Vagina (tissue), 2 donors: ENCODE measurements at regions of chrX and their contacts with region 1.

Region 1: GRCh38 chrX:110156167-110156754 is 153.3 kb downstream of the TMEM164 start:
- DNase-seq: no peak
- H3K4me3 ChIP-seq: no peak overlapping the region
- H3K27ac ChIP-seq: no peak overlapping the region
- H3K4me1 ChIP-seq: peaks cover 7% of the 10 kb centered on the region
- H3K27me3 ChIP-seq: no peaks in the 10 kb centered on the region
- CTCF ChIP-seq: peak in 2 of 3 experiments; percentile 37 to 39
- POLR2A ChIP-seq: no peak

Region 2: DNA sequence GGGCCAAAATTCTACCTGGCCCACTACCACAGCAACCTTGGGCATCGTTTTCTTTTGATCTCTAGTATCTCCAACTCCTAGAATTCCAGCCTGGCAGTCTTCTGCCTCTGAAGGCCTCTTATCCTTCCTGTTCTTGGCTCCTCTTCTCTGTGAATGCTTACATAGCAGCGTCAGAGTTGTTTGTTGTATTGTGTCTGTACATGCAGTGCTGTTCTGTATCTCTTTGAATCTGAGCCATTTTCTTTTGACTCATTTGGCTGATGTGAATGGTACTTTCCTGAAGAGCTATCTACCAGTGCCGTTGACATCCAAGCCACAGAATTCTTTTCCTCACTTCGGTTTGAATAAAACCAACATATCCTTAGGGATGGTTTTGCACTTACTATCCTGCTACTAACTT is 74.1 kb before region 1 on chrX:
- intact Hi-C with region 1: no loop called
- DNase-seq: no peak
- H3K4me3 ChIP-seq: no peak overlapping the region
- H3K27ac ChIP-seq: no peak overlapping the region
- H3K4me1 ChIP-seq: peaks cover 8% of the 10 kb centered on the region
- H3K27me3 ChIP-seq: no peaks in the 10 kb centered on the region
- CTCF ChIP-seq: no peak
- POLR2A ChIP-seq: no peak

Region 3: DNA sequence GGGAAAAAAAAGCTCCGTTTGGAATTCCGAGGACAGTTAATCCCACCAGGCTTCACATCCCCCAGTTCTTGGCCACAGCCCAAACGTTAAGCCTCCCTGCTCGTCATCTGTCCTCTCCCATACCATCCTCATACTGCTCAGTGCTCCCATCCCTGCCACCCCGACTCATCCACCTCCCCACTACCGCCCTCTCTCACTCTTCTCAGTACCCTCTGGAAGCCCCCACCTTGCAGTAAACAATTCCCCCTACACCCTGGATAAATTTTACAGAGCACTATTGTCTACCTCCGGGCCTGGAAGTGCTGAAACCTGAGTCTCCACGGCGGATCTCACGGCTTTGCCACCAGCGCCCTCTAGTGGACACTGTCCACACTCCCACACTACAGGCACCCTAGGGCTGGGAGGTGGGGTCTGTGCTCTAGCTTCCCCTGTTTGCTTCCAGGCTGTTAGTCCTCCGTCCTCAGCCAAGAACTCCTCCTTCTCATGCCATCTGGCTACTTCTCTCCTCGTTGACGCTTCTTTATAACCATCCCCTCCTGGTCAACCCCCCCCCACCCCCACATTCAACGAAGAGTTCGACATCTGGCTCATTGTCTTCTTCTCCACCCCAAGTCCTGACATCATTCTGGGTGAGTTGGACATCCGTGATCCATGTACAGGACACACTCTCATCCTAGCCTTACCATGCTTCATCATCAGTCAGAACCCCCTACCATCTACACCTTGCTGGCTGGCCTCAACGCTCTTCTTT is 256.9 kb after region 1 on chrX:
- intact Hi-C with region 1: loop called (anchors 5 kb)
- DNase-seq: no peak
- H3K4me3 ChIP-seq: no peak overlapping the region
- H3K27ac ChIP-seq: no peak overlapping the region
- H3K4me1 ChIP-seq: peaks cover 7% of the 10 kb centered on the region
- H3K27me3 ChIP-seq: no peaks in the 10 kb centered on the region
- CTCF ChIP-seq: peak; percentile 54 to 66 (median 57)
- POLR2A ChIP-seq: no peak